Activated CD4-positive, alpha-beta T cell treated with anti-CD3 and anti-CD28 coated beads, Interleukin-2, amount 10 ng/mL, durations not matched to agents 24 days and 14 days (primary cell): ENCODE measurements at regions of chr5 and their contacts with region 1.

Region 1: DNA sequence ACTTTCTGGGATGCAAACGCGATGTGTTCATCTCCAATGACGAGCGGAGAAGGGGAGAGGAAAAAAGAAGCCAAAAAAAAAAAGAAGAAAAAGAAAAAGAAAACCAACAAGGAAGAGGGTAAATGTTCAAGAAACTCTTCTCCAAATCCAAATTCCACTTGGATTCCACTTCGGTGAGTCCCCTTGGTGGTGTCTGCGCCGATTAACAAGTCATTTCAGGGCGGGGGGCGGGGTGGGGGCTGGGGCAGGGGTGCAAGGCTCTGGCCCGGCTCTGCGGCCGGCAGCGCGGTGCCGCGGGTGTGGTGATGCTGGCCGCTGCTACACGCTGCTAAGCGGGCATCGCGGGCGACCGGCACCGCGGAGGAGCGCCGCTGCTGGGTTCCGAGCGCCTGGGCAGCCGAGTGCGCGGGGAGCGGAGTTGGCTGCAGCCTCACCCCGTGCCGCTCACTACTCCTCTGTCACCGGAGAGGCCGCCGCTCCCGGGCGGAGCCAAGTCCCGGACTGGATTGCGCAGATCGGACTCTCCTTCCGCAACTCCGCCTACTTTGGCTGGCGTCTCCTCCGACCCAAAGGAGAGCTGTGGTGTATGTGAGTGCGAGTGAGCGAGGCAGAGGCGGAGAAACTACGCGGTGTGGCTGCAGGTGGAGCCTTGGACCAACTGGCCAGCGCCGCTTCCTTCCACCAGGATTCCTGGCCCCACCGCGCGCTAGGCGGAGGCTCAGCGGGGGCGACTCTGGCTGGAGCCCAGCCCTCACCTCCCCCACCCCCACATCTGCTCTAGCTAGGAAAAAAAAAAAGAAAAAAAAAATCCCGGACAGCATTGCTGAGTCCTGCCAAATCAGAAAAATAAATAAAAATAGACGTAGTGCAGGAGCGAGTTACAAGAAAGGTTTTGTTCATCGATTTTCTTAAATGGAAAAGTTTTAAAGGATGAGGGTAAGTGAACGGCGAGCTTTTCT is at the start of gene SEMA6A:
- DNase-seq: peak; percentile 88
- H3K4me3 Mint-ChIP-seq: peak within 1 kb of the TSS; percentile 67
- H3K27ac Mint-ChIP-seq: peak within 1 kb of the TSS; percentile 46
- H3K4me1 Mint-ChIP-seq: peaks cover 20% of the 10 kb centered on the region
- H3K27me3 Mint-ChIP-seq: peaks cover 80% of the 10 kb centered on the region
- total RNA-seq, gene SEMA6A: 0.19 and 0.24 TPM in 2 replicates

Region 2: DNA sequence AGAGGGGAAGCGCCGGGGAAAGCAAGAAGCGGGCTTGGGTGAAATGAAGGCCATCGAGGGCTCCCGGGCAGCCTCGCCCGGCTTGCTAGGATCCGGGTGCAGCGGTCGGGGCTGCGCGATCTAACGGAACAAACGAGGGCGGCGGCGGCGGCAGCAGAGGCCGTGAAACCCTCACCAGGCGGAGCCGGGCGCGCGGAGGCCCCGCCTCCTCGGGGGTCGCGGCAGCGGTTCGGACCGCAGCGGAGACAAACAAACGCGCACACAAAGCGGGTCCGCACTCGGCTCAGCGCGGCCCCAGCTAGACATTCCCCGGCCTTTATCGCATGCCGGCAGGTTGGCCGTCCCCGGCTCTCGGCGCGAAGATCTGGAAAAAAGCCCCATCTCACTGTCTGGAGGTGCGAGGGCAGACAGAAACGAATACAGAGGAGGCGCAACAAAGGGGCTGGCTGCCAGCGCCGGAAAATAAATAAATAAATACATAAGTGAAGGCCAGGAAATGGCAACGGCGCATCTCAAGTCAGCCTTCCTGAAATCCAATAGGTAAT is 1394.4 kb before region 1 on chr5:
- intact Hi-C with region 1: loop called (anchors 5 kb)
- DNase-seq: peak; percentile 80
- H3K4me3 Mint-ChIP-seq: peak overlapping the region; percentile 90
- H3K27ac Mint-ChIP-seq: no peak overlapping the region
- H3K4me1 Mint-ChIP-seq: peaks cover 7% of the 10 kb centered on the region
- H3K27me3 Mint-ChIP-seq: peaks cover 73% of the 10 kb centered on the region

Region 3: DNA sequence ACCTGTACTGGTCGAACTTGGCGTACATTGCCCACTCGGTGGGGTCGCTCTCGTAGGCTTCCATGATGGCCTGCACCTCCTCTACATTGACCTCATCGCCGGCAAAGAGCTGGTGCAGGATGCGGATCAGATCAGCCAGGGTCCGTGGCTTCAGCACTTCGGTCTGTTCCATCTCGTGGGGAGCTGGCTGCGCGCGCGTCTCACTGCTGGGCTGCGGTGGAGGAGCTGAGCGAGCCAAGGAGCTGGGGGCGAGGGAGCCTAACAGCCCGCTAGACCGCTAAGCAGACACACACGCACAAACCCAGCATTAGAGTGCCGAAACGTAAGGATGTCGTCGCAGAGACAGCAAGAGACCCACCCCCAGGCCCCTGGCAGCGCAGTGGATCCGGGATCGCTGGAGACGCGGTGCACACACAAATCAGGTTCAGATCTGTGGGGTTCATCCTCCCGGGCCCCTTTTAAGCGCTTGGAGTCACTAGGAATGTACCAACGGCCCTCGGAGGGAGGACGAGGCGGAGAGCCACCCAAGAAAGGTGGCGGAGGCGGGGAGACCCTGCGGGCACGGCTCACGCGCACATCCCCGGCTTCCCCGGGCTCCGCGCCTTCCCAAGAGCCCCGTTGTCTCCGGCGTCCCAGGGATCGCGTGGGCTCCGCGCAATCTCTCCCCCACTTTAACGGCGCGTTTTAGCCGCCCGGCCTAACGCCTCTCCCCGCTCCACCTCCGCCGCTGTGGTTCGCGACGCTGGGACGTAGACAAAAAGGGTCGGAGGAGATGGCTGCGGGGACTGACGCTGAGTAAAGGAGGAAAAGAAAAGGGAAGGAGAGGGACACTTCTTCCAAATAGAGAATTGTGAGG is 758.2 kb before region 1 on chr5 and contains the start of gene CDO1:
- intact Hi-C with region 1: loop called (anchors 10 kb)
- DNase-seq: peak; percentile 77
- H3K4me3 Mint-ChIP-seq: peak within 1 kb of the TSS; percentile 78
- H3K27ac Mint-ChIP-seq: no peak within 1 kb of the TSS
- H3K4me1 Mint-ChIP-seq: peaks cover 22% of the 10 kb centered on the region
- H3K27me3 Mint-ChIP-seq: peaks cover 75% of the 10 kb centered on the region
- total RNA-seq, gene CDO1: 0.45 and 0.82 TPM in 2 replicates

Region 4: DNA sequence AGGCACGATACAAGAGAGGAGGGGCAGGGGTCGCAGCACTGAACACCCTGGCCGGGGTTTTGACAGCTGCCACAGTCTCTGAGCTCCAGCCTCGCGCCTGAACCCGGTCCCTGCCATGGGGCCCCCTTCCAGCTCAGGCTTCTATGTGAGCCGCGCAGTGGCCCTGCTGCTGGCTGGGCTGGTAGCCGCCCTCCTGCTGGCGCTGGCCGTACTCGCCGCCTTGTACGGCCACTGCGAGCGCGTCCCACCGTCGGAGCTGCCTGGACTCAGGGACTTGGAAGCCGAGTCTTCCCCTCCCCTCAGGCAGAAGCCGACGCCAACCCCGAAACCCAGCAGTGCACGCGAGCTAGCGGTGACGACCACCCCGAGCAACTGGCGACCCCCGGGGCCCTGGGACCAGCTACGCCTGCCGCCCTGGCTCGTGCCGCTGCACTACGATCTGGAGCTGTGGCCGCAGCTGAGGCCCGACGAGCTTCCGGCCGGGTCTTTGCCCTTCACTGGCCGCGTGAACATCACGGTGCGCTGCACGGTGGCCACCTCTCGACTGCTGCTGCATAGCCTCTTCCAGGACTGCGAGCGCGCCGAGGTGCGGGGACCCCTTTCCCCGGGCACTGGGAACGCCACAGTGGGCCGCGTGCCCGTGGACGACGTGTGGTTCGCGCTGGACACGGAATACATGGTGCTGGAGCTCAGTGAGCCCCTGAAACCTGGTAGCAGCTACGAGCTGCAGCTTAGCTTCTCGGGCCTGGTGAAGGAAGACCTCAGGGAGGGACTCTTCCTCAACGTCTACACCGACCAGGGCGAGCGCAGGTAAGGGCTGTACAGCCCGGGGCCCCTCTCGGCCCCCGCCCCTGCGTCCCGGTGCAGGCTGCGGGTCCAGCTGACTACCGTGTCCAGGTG is 611.9 kb before region 1 on chr5:
- intact Hi-C with region 1: loop called (anchors 10 kb)
- DNase-seq: no peak
- H3K4me3 Mint-ChIP-seq: no peak overlapping the region
- H3K27ac Mint-ChIP-seq: no peak overlapping the region
- H3K4me1 Mint-ChIP-seq: no peaks in the 10 kb centered on the region
- H3K27me3 Mint-ChIP-seq: peaks cover 63% of the 10 kb centered on the region

Region 5: DNA sequence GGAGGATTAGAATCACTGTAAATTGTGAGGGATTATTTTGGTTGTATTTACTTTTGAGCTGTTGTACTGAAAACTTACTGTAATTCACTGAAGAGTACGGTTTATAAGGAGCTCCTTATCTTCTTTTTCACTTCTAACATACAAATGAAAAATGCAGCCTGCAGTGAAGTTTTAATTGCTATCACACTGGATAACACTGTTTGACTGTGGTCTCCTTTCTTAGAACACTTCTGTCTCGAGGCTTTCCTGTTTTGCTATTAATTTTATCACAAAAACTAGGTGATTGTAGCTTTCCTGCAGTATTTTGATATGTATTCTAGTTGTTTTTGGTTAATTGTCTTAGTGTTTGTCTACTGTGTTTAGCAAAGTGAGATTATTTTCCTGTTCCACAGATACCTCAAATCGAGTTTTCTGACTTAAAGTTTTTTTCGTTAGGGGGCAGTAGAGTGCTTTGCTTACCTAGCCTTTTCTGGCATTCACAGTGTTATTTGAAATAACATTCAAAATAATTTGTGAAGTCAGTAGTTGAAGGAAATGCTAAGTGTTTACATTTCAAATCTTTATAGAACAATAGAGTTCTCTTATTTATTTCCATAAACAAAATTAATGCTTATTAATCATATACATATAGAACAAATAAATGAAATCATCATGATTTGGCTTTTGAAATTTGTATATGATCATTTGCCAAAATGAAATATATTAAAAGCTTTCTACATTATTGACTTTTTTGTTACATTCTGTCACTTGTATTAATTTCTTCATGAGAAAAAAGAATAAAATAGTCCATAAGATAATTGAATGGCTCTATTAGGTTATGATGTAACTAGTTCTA is 436.9 kb before region 1 on chr5:
- intact Hi-C with region 1: loop called (anchors 10 kb)
- DNase-seq: peak; percentile 65
- H3K4me3 Mint-ChIP-seq: no peak overlapping the region
- H3K27ac Mint-ChIP-seq: no peak overlapping the region
- H3K4me1 Mint-ChIP-seq: peaks cover 8% of the 10 kb centered on the region
- H3K27me3 Mint-ChIP-seq: no peaks in the 10 kb centered on the region

Region 6: DNA sequence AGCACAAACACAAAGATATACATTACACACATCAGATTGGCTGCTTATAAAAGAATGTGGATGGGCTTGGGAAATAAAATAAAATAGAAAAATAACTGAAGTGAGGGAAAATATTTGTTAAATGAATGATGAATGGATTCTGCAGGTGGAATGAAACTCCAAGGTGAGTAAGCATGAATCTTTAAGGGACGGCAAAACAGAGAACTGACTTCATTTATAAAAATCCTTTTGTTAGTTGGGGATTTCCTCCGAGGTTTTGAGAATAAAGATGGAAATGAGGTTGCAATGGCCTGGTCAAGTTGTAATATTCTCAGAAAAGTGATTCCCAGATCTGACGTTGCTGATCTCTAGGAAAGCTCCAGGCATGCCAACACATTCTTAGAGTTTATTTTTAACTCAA is 20.9 kb after region 1 on chr5:
- intact Hi-C with region 1: no loop called
- DNase-seq: no peak
- H3K4me3 Mint-ChIP-seq: no peak overlapping the region
- H3K27ac Mint-ChIP-seq: no peak overlapping the region
- H3K4me1 Mint-ChIP-seq: no peaks in the 10 kb centered on the region
- H3K27me3 Mint-ChIP-seq: no peaks in the 10 kb centered on the region

Region 7: DNA sequence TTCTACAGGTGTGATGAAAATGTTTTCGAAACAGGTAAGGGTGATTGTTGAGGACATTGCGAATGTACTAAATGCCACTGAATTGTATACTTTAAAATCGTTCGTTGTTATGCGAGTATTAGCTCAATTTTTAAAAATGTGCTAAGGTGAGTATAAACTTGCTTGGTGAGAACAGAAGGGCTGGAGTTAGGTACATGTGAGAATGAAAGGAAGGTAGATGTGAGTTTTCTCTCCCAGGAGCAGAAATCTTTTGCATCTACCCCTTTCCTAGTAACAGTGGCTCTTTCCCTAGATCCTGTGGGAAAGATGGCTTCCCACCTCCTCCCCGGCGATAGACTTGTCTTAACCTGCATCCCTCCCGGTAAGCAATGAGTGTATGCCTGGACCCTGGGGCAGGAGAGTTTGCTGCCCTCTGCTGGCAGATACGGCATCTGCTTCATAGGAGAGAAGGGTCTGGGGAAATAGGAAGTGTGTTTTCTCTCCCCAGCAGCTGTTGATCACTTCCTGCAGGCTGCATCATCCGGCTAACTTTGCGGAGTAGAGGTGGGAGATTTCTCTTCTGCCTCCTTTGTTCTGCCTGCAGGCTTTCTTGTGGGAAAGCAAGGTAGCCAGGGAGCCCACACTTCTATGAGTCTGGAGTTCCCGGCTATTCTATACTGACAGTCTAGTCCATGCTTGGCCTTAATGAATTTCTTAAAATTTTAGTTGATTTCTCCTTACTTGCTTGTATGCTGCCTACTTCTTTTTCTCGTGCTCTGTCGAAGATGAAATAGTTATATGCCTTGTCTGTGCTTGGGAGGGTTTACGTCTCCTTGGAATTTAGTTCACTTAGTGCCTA is 373.3 kb after region 1 on chr5:
- intact Hi-C with region 1: loop called (anchors 2 kb)
- DNase-seq: peak; percentile 88
- H3K4me3 Mint-ChIP-seq: no peak overlapping the region
- H3K27ac Mint-ChIP-seq: no peak overlapping the region
- H3K4me1 Mint-ChIP-seq: no peaks in the 10 kb centered on the region
- H3K27me3 Mint-ChIP-seq: no peaks in the 10 kb centered on the region